Prostate gland (tissue), 2 donors: ENCODE measurements at regions of chr3 and their contacts with region 1.

Region 1: DNA sequence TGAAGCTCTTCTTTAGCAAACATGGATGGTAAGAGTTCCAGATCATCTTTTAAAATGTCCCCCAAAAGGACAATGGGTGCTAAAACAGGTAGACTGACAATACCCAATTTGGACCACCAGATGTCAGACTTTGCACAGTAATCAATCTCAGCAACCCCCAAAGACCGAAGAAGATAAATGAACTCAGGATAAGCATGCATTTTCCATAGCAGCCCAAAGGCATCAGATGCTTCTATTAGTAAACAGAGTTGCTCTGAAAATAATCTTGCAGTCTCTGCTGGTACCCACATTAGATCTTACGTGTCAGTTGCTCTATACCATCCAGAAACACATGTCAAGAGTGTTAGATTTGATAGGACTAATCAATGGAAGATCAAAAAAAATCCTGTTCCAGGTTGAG is 20.6 kb downstream of the MYH15 start:
- DNase-seq: peak; percentile 33
- H3K4me3 ChIP-seq: no peak overlapping the region
- H3K27ac ChIP-seq: no peak overlapping the region
- H3K4me1 ChIP-seq: no peaks in the 10 kb centered on the region
- H3K27me3 ChIP-seq: no peaks in the 10 kb centered on the region
- CTCF ChIP-seq: peak; percentile 39 to 85 (median 76)
- POLR2A ChIP-seq: no peak

Region 2: GRCh38 chr3:108552267-108553159 is 62.7 kb after region 1 on chr3:
- intact Hi-C with region 1: loop called (anchors 1 kb)
- DNase-seq: peak; percentile 29
- H3K4me3 ChIP-seq: no peak overlapping the region
- H3K27ac ChIP-seq: no peak overlapping the region
- H3K4me1 ChIP-seq: no peaks in the 10 kb centered on the region
- H3K27me3 ChIP-seq: no peaks in the 10 kb centered on the region
- CTCF ChIP-seq: peak; percentile 36 to 79 (median 64)
- POLR2A ChIP-seq: no peak

Region 3: DNA sequence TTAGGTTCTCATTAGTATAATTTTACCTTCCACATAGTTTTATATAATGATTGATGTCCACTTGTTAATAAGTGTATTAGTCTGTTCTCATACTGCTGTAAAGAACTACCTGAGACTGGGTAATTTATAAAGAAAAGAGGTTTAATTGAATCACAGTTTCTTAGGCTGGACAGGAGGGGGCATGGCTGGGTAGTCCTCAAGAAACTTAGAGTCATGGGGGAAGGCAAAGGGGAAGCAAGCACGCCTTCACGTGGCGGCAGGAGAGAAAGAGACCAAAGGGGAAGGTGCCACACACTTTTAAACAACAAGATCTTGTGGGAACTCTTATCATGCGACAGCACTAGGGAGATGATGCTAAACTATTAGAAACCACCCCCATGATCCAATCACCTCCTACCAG is 119.0 kb after region 1 on chr3:
- intact Hi-C with region 1: no loop called
- DNase-seq: no peak
- H3K4me3 ChIP-seq: no peak overlapping the region
- H3K27ac ChIP-seq: no peak overlapping the region
- H3K4me1 ChIP-seq: no peaks in the 10 kb centered on the region
- H3K27me3 ChIP-seq: no peaks in the 10 kb centered on the region
- CTCF ChIP-seq: no peak
- POLR2A ChIP-seq: no peak